ENCODE measurements at regions of chr3 and their contacts with region 1.

Region 1: GRCh38 chr3:160343132-160343531 is 55.9 kb downstream of the IFT80 start:
- DNase-seq: no peak
- H3K4me3 Mint-ChIP-seq: no peak overlapping the region
- H3K27ac Mint-ChIP-seq: no peak overlapping the region
- H3K4me1 Mint-ChIP-seq: no peaks in the 10 kb centered on the region
- H3K27me3 Mint-ChIP-seq: no peaks in the 10 kb centered on the region

Region 2: GRCh38 chr3:159884661-159885402 is 458.3 kb before region 1 on chr3:
- intact Hi-C with region 1: loop called (anchors 10 kb)
- DNase-seq: peak; percentile 62
- H3K4me3 Mint-ChIP-seq: no peak overlapping the region
- H3K27ac Mint-ChIP-seq: no peak overlapping the region
- H3K4me1 Mint-ChIP-seq: no peaks in the 10 kb centered on the region
- H3K27me3 Mint-ChIP-seq: peaks cover 25% of the 10 kb centered on the region

Region 3: DNA sequence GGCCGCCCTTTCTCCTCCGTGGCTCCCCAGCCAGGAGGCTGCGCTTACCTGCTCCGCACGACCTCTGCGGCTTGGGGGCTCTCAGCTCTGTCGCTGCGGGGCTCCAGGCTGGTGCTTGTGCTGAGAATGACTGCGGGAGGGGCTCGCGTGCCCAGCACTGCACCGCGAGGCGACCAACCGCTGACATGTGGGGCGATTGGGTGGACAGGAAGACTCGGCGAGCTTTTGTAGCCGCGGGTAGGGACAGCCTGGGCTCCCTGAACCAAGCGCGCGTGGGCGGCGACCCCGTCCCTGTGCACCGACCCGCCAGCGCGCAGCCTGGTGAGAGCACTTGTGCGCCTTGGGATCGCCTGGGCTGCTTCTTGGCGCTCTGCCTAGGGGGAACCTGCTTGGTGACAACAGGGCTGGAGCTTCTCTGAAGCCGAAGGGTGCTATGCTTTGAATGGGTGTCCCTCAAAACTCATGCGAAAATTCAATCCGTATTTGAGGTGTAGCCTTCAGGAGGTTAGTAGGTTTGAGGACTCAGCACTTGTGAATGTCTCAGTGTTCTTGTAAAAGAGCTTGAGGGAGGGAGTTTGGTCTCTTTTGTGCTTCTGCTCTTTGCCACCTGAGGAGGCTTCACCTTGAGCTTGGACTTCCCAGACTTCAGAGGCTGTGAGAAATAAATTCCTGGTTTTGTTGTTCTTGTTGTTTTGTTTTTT is 304.1 kb before region 1 on chr3:
- intact Hi-C with region 1: loop called (anchors 10 kb)
- DNase-seq: peak; percentile 59
- H3K4me3 Mint-ChIP-seq: peak overlapping the region; percentile 35
- H3K27ac Mint-ChIP-seq: no peak overlapping the region
- H3K4me1 Mint-ChIP-seq: peaks cover 12% of the 10 kb centered on the region
- H3K27me3 Mint-ChIP-seq: peaks cover 43% of the 10 kb centered on the region

Region 4: DNA sequence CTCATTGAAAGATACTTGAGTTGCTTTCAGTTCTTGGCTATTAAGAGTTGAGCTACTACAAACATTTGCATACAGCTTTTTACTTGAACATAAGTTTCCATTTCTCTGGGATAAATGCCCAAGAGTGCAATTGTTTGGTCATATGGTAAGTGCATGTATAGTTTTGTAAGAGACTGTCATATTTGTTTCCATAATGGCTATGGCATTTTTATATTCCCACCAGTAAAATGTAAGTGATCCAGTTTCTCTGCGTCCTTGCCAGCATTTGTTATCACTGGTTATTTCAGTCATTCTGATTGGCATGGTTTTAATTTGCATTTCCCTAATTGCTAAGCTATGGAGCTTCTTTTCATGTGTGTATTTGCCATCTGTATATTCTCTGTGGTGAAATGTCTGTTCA is 95.4 kb before region 1 on chr3:
- intact Hi-C with region 1: no loop called
- DNase-seq: no peak
- H3K4me3 Mint-ChIP-seq: no peak overlapping the region
- H3K27ac Mint-ChIP-seq: no peak overlapping the region
- H3K4me1 Mint-ChIP-seq: no peaks in the 10 kb centered on the region
- H3K27me3 Mint-ChIP-seq: peaks cover 43% of the 10 kb centered on the region